T-cell (primary cell): ENCODE measurements at regions of chrX and their contacts with region 1.

Region 1: GRCh38 chrX:49191033-49191871 is 5.1 kb upstream of the PRICKLE3 start:
- DNase-seq: peak; percentile 49 to 94 (median 83)
- ATAC-seq: peak; percentile 86 to 88 (median 88)
- H3K4me3 ChIP-seq: peak overlapping the region; percentile 42 to 70
- H3K4me3 Mint-ChIP-seq: peak overlapping the region; percentile 78 to 91 (median 90)
- H3K27ac ChIP-seq: peak overlapping the region; percentile 70
- H3K27ac Mint-ChIP-seq: peak overlapping the region; percentile 91 to 95
- H3K4me1 ChIP-seq: peaks cover 2 to 26% of the 10 kb centered on the region in 2 experiments
- H3K4me1 Mint-ChIP-seq: peaks cover 16 to 39% (median 22%) of the 10 kb centered on the region in 3 donors
- H3K27me3 ChIP-seq: no peaks in the 10 kb centered on the region
- H3K27me3 Mint-ChIP-seq: peaks cover 0 to 3% of the 10 kb centered on the region in 2 donors

Region 2: DNA sequence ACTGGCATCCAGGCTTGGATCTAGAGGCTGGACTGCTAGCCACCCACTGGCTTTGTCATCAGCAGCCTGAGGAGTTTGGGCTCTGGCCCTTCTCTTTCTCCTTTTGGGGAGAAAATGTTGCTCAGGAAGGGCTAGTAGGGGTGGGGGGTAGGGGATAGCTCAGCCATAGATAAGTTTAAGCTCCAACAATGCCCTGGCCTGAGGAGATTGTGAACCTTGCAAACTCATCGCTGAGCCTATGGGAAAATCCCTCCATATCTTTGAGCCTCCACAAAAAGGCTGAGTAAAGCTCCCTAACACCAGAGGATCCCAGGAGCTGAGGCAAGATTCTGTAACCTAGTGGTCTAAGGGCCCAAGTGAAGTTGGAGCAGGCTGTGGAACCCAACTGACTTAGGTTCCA is 242.7 kb before region 1 on chrX:
- CTCF ChIA-PET with region 1: no interaction called
- POLR2A ChIA-PET with region 1: no interaction called
- DNase-seq: no peak
- ATAC-seq: no peak
- H3K4me3 ChIP-seq: no peak overlapping the region
- H3K4me3 Mint-ChIP-seq: no peak overlapping the region
- H3K27ac ChIP-seq: no peak overlapping the region
- H3K27ac Mint-ChIP-seq: no peak overlapping the region
- H3K4me1 ChIP-seq: peaks cover 0 to 57% of the 10 kb centered on the region in 2 experiments
- H3K4me1 Mint-ChIP-seq: peaks cover 45 to 56% (median 48%) of the 10 kb centered on the region in 3 donors
- H3K27me3 ChIP-seq: no peaks in the 10 kb centered on the region
- H3K27me3 Mint-ChIP-seq: no peaks in the 10 kb centered on the region

Region 3: DNA sequence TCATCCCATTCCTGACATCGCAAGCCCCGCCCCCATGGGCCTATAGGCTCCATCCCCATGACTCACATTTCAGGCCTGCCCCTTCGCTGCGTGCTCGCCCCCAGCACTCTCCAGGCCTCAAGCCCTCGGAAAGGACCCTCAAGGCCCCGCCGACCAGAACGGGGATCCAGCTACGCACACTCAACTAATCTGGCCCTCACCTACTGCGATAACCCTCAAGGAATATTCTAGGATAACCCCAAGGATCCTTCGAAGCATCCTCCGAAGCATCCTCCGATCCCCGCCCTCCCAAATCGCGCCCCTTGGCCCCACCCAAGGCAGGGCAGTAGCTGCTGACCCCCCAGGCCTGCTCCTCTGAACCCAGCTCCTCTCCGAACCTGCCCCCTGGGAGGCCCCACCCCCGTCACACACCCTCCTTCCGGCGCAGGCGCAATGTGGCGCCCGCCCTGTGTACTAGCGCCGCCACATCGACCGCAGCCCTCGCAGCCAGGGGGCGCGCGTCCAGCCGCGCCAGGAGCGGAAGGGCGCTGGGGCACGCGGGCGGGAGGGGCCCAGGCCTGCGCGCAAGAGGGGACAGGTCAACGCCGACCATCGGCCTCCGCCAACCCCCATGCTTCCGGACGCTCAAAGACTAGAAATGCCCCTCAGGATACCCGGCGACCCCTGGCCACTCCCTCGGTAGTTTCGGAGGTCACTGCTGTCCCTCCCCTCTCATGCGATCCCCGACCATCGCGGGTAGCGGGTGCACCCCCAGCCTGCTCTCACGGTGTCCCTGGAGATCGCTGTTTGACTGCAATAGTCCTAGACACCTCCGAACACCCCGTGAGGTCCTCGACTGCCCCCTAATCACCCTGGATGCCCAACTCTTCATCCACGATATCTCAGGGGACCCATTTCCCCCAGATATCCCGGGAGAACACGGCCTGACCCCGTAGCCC is 35.1 kb before region 1 on chrX:
- CTCF ChIA-PET with region 1: interaction called in 1 of 2 experiments, 25 read pairs
- POLR2A ChIA-PET with region 1: interaction called in 1 of 2 experiments, 6 read pairs
- DNase-seq: peak; percentile 68 to 90 (median 81)
- ATAC-seq: peak; percentile 92 to 94 (median 93)
- H3K4me3 ChIP-seq: peak overlapping the region; percentile 47 to 63
- H3K4me3 Mint-ChIP-seq: peak overlapping the region; percentile 92 to 93 (median 92)
- H3K27ac ChIP-seq: peak overlapping the region; percentile 90
- H3K27ac Mint-ChIP-seq: peak overlapping the region; percentile 94 to 97
- H3K4me1 ChIP-seq: peaks cover 0 to 18% of the 10 kb centered on the region in 2 experiments
- H3K4me1 Mint-ChIP-seq: peaks cover 15 to 24% (median 16%) of the 10 kb centered on the region in 3 donors
- H3K27me3 ChIP-seq: no peaks in the 10 kb centered on the region
- H3K27me3 Mint-ChIP-seq: no peaks in the 10 kb centered on the region

Region 4: GRCh38 chrX:49165901-49166881 is 25.1 kb before region 1 on chrX:
- CTCF ChIA-PET with region 1: interaction called in 1 of 2 experiments, 10 read pairs
- POLR2A ChIA-PET with region 1: interaction called in 1 of 2 experiments, 6 read pairs
- DNase-seq: peak; percentile 33 to 79 (median 66)
- ATAC-seq: peak; percentile 61 to 71 (median 63)
- H3K4me3 ChIP-seq: peak overlapping the region; percentile 42 to 46
- H3K4me3 Mint-ChIP-seq: peak overlapping the region; percentile 72 to 86 (median 72)
- H3K27ac ChIP-seq: peak overlapping the region; percentile 86
- H3K27ac Mint-ChIP-seq: peak overlapping the region; percentile 93 to 97
- H3K4me1 ChIP-seq: peaks cover 7 to 49% of the 10 kb centered on the region in 2 experiments
- H3K4me1 Mint-ChIP-seq: peaks cover 29 to 35% (median 34%) of the 10 kb centered on the region in 3 donors
- H3K27me3 ChIP-seq: no peaks in the 10 kb centered on the region
- H3K27me3 Mint-ChIP-seq: no peaks in the 10 kb centered on the region